ENCODE measurements at regions of chr16 and their contacts with region 1.

Region 1: DNA sequence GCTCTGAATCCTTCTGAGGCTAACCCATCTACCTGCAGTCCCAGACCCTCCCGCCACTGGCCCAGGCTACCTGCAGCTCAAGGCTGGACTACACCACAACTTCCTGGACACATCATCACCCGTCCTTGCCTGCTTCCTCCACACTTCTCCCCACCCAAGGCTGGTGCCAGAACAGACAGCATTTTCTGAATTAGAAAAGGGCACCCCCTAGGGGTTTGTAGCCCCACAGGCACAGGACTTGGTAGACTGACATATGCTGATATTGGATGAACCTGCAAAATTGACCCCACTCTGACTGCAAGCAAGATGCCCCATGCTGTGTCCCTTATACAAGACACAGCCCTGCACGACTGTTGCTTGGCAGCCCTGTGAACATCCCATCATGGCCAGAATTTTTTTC is 271.5 kb upstream of the C16orf82 start:
- DNase-seq: peak; percentile 87
- H3K4me3 ChIP-seq: no peak overlapping the region
- H3K27ac ChIP-seq: no peak overlapping the region
- H3K4me1 ChIP-seq: peaks cover 16% of the 10 kb centered on the region
- CTCF ChIP-seq: peak; percentile 87

Region 2: GRCh38 chr16:26464576-26465266 is 330.5 kb before region 1 on chr16:
- CTCF ChIA-PET with region 1: no interaction called
- POLR2A ChIA-PET with region 1: no interaction called
- intact Hi-C with region 1: loop called (anchors 10 kb)
- DNase-seq: no peak
- H3K4me3 ChIP-seq: no peak overlapping the region
- H3K27ac ChIP-seq: no peak overlapping the region
- H3K4me1 ChIP-seq: no peaks in the 10 kb centered on the region
- CTCF ChIP-seq: peak; percentile 45; the same call in 1 of the 2 replicates

Region 3: DNA sequence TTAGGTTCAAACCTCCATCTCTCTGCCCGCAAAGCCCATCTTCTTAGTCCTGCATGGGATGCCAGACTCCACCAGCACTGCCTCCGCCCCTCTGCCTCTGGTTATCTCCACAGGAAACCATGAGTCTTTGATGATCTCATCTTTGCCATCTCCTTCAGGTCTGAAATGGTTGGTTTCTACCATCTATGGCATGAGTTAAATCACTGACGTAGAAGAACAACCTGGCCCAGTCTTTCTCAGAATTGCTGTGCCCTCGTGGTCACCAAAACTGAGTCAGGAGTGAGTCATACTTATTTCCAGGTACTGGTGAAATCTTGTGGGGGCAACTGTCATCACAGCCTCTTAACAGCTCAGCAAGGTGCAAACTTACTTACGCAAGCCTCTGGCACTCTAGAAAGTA is 197.1 kb before region 1 on chr16:
- CTCF ChIA-PET with region 1: no interaction called
- POLR2A ChIA-PET with region 1: no interaction called
- intact Hi-C with region 1: no loop called
- DNase-seq: no peak
- H3K4me3 ChIP-seq: no peak overlapping the region
- H3K27ac ChIP-seq: no peak overlapping the region
- H3K4me1 ChIP-seq: no peaks in the 10 kb centered on the region
- CTCF ChIP-seq: no peak

Region 4: GRCh38 chr16:26645614-26646013 is 149.6 kb before region 1 on chr16:
- CTCF ChIA-PET with region 1: no interaction called
- POLR2A ChIA-PET with region 1: no interaction called
- intact Hi-C with region 1: loop called (anchors 1 kb)
- DNase-seq: peak; percentile 80
- H3K4me3 ChIP-seq: no peak overlapping the region
- H3K27ac ChIP-seq: peak overlapping the region; percentile 29
- H3K4me1 ChIP-seq: peaks cover 92% of the 10 kb centered on the region
- CTCF ChIP-seq: peak; percentile 98

Measured in OCI-LY7 (cell line).